ENCODE measurements at regions of chr2 and their contacts with region 1.

Region 1: GRCh38 chr2:6835467-6835866 is 30.2 kb downstream of the CMPK2 start:
- DNase-seq: no peak
- H3K4me3 Mint-ChIP-seq: no peak overlapping the region
- H3K27ac Mint-ChIP-seq: no peak overlapping the region
- H3K4me1 Mint-ChIP-seq: peaks cover 14% of the 10 kb centered on the region
- H3K27me3 Mint-ChIP-seq: no peaks in the 10 kb centered on the region

Region 2: DNA sequence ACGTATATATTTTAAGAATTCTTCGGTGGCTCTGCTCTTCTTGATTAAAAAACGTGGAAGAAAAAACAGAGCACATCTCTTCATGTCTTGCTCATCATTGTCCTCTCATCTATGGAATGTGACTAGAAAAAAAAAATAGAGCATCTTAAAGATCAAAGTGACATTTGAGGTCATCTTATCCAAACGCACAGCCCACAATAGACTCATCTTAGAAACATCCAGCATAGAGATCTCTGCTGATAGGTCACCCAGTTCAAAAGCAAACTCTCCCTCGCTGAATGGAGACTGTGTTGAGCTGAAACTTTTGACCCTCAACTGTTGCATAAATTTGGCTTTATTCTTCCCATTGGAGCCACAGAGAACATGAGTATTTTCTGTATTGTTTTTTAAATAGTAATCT is 34.9 kb before region 1 on chr2:
- CTCF ChIA-PET with region 1: no interaction called
- POLR2A ChIA-PET with region 1: no interaction called
- intact Hi-C with region 1: no loop called
- DNase-seq: no peak
- H3K4me3 Mint-ChIP-seq: no peak overlapping the region
- H3K27ac Mint-ChIP-seq: no peak overlapping the region
- H3K4me1 Mint-ChIP-seq: no peaks in the 10 kb centered on the region
- H3K27me3 Mint-ChIP-seq: peaks cover 13% of the 10 kb centered on the region

Region 3: GRCh38 chr2:6845903-6846302 is 10.4 kb after region 1 on chr2:
- CTCF ChIA-PET with region 1: no interaction called
- POLR2A ChIA-PET with region 1: no interaction called
- intact Hi-C with region 1: no loop called
- DNase-seq: no peak
- H3K4me3 Mint-ChIP-seq: no peak overlapping the region
- H3K27ac Mint-ChIP-seq: no peak overlapping the region
- H3K4me1 Mint-ChIP-seq: no peaks in the 10 kb centered on the region
- H3K27me3 Mint-ChIP-seq: no peaks in the 10 kb centered on the region

Region 4: GRCh38 chr2:6865346-6866274 is 30.1 kb after region 1 on chr2 and contains the start of gene CMPK2:
- CTCF ChIA-PET with region 1: interaction called, 3 read pairs
- POLR2A ChIA-PET with region 1: no interaction called
- intact Hi-C with region 1: loop called (anchors 2 kb)
- DNase-seq: peak; percentile 84
- H3K4me3 Mint-ChIP-seq: peak within 1 kb of the TSS; percentile 92
- H3K27ac Mint-ChIP-seq: peak within 1 kb of the TSS; percentile 85
- H3K4me1 Mint-ChIP-seq: peaks cover 7% of the 10 kb centered on the region
- H3K27me3 Mint-ChIP-seq: peaks cover 2% of the 10 kb centered on the region
- total RNA-seq, gene CMPK2: 6.6 to 6.8 TPM

Measured in activated CD4-positive, alpha-beta memory T cell treated with anti-CD3 and anti-CD28 coated beads for 36 hours (primary cell).